ENCODE measurements at regions of chr1 and their contacts with region 1.

Region 1: GRCh38 chr1:54199765-54200518 is at the starts of genes CYB5RL and MRPL37:
- DNase-seq: peak; percentile 94
- H3K4me3 Mint-ChIP-seq: peak within 1 kb of the TSS; percentile 90
- H3K27ac Mint-ChIP-seq: peak within 1 kb of the TSS; percentile 75
- H3K4me1 Mint-ChIP-seq: peaks cover 29% of the 10 kb centered on the region
- H3K27me3 Mint-ChIP-seq: no peaks in the 10 kb centered on the region
- total RNA-seq, gene CYB5RL: 12.8 to 13.0 TPM
- total RNA-seq, gene MRPL37: 157 to 166 TPM

Region 2: DNA sequence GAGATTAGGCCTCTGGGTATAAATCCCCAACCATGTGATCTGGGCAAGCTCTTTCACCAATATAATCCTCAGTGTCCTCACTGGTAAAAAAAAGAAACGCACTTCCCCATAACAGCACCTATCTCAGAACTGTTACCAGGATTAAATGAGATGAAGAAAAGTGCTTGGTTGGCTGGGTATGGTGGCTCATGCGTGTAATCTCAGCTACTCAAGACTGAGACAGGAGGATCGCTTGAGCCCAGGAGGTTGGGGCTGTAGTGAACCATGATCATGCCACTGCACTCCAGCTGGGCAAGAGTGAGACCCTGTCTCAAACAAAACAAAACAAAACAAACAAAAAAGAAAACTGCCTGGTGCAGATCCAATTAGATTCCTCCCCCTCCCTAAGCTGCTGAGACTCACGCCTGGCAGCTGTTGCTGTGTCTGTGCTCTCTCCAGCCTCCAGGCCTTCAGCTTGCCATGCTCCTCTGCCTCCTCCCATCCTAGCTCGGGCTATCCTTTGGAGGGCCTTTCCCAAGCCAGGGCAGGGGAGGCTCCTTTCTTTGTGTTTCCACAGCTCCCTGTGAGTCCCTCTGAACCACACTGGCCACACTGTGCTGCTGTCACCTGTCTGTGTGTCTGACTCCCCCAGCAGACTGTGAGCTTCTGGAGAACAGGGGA is 19.1 kb before region 1 on chr1:
- CTCF ChIA-PET with region 1: interaction called, 16 read pairs
- POLR2A ChIA-PET with region 1: no interaction called
- intact Hi-C with region 1: no loop called
- DNase-seq: no peak
- H3K4me3 Mint-ChIP-seq: no peak overlapping the region
- H3K27ac Mint-ChIP-seq: no peak overlapping the region
- H3K4me1 Mint-ChIP-seq: no peaks in the 10 kb centered on the region
- H3K27me3 Mint-ChIP-seq: no peaks in the 10 kb centered on the region

Region 3: DNA sequence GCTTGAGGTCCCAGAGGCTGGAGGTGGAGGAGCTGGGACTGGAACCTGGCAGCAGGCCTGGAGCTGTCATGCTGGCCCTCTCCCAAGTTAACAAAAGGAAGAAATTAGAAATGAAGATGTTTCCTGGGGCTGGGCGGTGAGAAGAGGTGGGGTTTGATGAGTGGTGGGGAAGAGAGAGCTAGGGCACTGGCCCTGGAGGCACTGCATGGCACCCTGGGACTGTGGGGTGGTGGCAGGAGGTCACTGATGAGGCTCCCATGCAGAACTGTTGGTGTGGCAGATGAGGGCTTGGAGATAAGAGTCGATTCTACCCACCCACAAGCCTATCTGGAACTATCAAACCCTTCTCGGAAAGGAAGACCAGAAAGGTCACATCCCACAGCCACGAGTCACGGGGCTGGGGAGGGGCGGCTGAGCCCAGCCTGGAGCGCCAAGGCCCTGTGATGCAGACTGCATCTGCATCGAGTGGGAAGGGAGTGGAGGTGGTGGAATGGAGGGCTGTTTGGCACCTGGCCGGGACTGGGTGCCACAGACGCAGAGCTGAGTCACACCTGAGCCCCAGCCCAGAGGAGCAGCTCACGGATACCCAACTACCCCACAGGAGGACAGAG is 29.4 kb after region 1 on chr1:
- CTCF ChIA-PET with region 1: no interaction called
- POLR2A ChIA-PET with region 1: interaction called, 4 read pairs
- intact Hi-C with region 1: loop called (anchors 2 kb)
- DNase-seq: peak; percentile 62
- H3K4me3 Mint-ChIP-seq: no peak overlapping the region
- H3K27ac Mint-ChIP-seq: peak overlapping the region; percentile 11
- H3K4me1 Mint-ChIP-seq: peaks cover 39% of the 10 kb centered on the region
- H3K27me3 Mint-ChIP-seq: no peaks in the 10 kb centered on the region

Region 4: GRCh38 chr1:54400329-54400728 is 200.4 kb after region 1 on chr1:
- CTCF ChIA-PET with region 1: interaction called, 6 read pairs
- POLR2A ChIA-PET with region 1: no interaction called
- intact Hi-C with region 1: loop called (anchors 2 kb)
- DNase-seq: peak; percentile 68
- H3K4me3 Mint-ChIP-seq: peak overlapping the region; percentile 30
- H3K27ac Mint-ChIP-seq: peak overlapping the region; percentile 67
- H3K4me1 Mint-ChIP-seq: peaks cover 69% of the 10 kb centered on the region
- H3K27me3 Mint-ChIP-seq: no peaks in the 10 kb centered on the region

Measured in activated CD4-positive, alpha-beta memory T cell treated with anti-CD3 and anti-CD28 coated beads for 36 hours (primary cell).